ENCODE measurements at regions of chr1 and their contacts with region 1.

Region 1: GRCh38 chr1:28736450-28737306 is at the start of gene YTHDF2:
- DNase-seq: peak; percentile 96 to 99 (median 97)
- ATAC-seq: peak; percentile 94 to 95 (median 95)
- H3K4me3 ChIP-seq: peak within 1 kb of the TSS; percentile 69 to 92
- H3K4me3 Mint-ChIP-seq: peak within 1 kb of the TSS; percentile 93 to 98 (median 96)
- H3K27ac ChIP-seq: peak within 1 kb of the TSS; percentile 88
- H3K27ac Mint-ChIP-seq: peak within 1 kb of the TSS; percentile 92 to 94
- H3K4me1 ChIP-seq: peaks cover 19 to 32% of the 10 kb centered on the region in 2 experiments
- H3K4me1 Mint-ChIP-seq: peaks cover 32 to 39% (median 38%) of the 10 kb centered on the region in 3 donors
- H3K27me3 ChIP-seq: no peaks in the 10 kb centered on the region
- H3K27me3 Mint-ChIP-seq: no peaks in the 10 kb centered on the region
- total RNA-seq, gene YTHDF2: 61.3 to 77.3 (median 67.0) TPM

Region 2: GRCh38 chr1:28642847-28643635 is 93.6 kb before region 1 on chr1 and contains the start of gene TAF12:
- CTCF ChIA-PET with region 1: interaction called in 1 of 2 experiments, 92 read pairs
- POLR2A ChIA-PET with region 1: interaction called, 6 to 32 read pairs
- DNase-seq: peak; percentile 83 to 98 (median 91)
- ATAC-seq: peak; percentile 85 to 87 (median 86)
- H3K4me3 ChIP-seq: peak within 1 kb of the TSS; percentile 88 to 92
- H3K4me3 Mint-ChIP-seq: peak within 1 kb of the TSS; percentile 94 to 100 (median 95)
- H3K27ac ChIP-seq: peak within 1 kb of the TSS; percentile 95
- H3K27ac Mint-ChIP-seq: peak within 1 kb of the TSS; percentile 96 to 99
- H3K4me1 ChIP-seq: peaks cover 28 to 34% of the 10 kb centered on the region in 2 experiments
- H3K4me1 Mint-ChIP-seq: peaks cover 58% of the 10 kb centered on the region in 3 donors
- H3K27me3 ChIP-seq: no peaks in the 10 kb centered on the region
- H3K27me3 Mint-ChIP-seq: no peaks in the 10 kb centered on the region
- total RNA-seq, gene TAF12: 17.3 to 22.7 (median 20.6) TPM

Region 3: GRCh38 chr1:28668191-28668955 is 68.3 kb before region 1 on chr1 and contains the start of gene GMEB1:
- CTCF ChIA-PET with region 1: interaction called, 6 to 21 read pairs
- POLR2A ChIA-PET with region 1: interaction called, 4 to 7 read pairs
- DNase-seq: peak; percentile 55 to 91 (median 76)
- ATAC-seq: peak; percentile 74 to 80 (median 78)
- H3K4me3 ChIP-seq: peak within 1 kb of the TSS; percentile 89 to 100
- H3K4me3 Mint-ChIP-seq: peak within 1 kb of the TSS; percentile 85 to 94 (median 92)
- H3K27ac ChIP-seq: peak within 1 kb of the TSS; percentile 97
- H3K27ac Mint-ChIP-seq: peak within 1 kb of the TSS; percentile 99
- H3K4me1 ChIP-seq: peaks cover 8 to 37% of the 10 kb centered on the region in 2 experiments
- H3K4me1 Mint-ChIP-seq: peaks cover 20 to 25% (median 22%) of the 10 kb centered on the region in 3 donors
- H3K27me3 ChIP-seq: no peaks in the 10 kb centered on the region
- H3K27me3 Mint-ChIP-seq: no peaks in the 10 kb centered on the region
- total RNA-seq, gene GMEB1: 15.2 to 19.0 (median 18.4) TPM

Region 4: DNA sequence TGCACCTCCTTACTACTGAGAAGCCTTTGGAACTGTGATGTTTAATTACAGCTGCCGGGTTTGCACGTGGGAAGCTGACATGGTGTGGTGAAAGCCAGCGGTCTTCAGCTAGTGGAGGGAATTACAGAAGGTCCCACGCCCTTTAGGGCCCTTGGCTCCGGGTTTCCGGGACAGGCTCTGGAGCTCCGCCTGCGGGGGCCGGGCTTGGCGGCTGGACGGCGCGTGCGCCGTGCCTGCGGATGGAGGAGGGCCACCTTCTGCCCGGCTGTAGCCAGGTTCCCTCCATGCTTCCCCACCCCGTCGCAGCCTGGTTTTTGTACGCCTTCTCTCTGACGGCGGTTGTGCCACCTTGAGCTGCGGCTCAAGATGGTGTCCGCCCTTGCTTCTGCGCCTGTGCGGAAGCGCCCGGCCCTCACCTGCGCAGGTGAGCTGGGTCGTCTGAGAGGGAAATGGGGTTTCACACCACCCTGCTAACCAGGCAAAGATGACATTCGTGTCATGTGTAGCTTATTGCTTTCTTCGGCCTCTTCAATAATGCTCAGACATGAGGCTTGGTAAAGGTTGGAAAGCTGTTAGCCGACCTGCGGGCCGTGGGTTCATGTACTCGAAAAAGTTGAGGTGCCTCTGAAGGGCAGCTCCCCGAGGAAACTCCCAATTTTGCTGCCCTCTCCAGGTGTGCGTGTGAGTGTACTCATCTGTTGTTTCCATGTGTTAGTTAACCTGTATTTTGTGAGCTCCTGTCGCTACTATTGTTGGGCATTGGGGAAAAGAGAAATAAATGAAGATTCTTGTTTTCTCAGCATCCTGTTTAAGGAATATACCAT is 38.7 kb after region 1 on chr1:
- CTCF ChIA-PET with region 1: interaction called, 3 to 32 read pairs
- POLR2A ChIA-PET with region 1: interaction called in 1 of 2 experiments, 5 read pairs
- DNase-seq: peak; percentile 47 to 80 (median 67)
- ATAC-seq: peak; percentile 91 to 95 (median 94)
- H3K4me3 ChIP-seq: peak overlapping the region; percentile 64 to 76
- H3K4me3 Mint-ChIP-seq: peak overlapping the region; percentile 75 to 85 (median 78)
- H3K27ac ChIP-seq: peak overlapping the region; percentile 64
- H3K27ac Mint-ChIP-seq: peak overlapping the region; percentile 76 to 81
- H3K4me1 ChIP-seq: peaks cover 2 to 16% of the 10 kb centered on the region in 2 experiments
- H3K4me1 Mint-ChIP-seq: peaks cover 5 to 10% (median 9%) of the 10 kb centered on the region in 3 donors
- H3K27me3 ChIP-seq: no peaks in the 10 kb centered on the region
- H3K27me3 Mint-ChIP-seq: no peaks in the 10 kb centered on the region

Region 5: GRCh38 chr1:28792644-28793121 is 56.0 kb after region 1 on chr1:
- CTCF ChIA-PET with region 1: no interaction called
- POLR2A ChIA-PET with region 1: no interaction called
- DNase-seq: no peak
- ATAC-seq: no peak
- H3K4me3 ChIP-seq: no peak overlapping the region
- H3K4me3 Mint-ChIP-seq: no peak overlapping the region
- H3K27ac ChIP-seq: no peak overlapping the region
- H3K27ac Mint-ChIP-seq: no peak overlapping the region
- H3K4me1 ChIP-seq: no peaks in the 10 kb centered on the region
- H3K4me1 Mint-ChIP-seq: peaks cover 0 to 7% (median 0%) of the 10 kb centered on the region in 3 donors
- H3K27me3 ChIP-seq: peaks cover 0 to 21% of the 10 kb centered on the region in 2 experiments
- H3K27me3 Mint-ChIP-seq: peaks cover 13 to 17% of the 10 kb centered on the region in 2 donors

Region 6: GRCh38 chr1:29181413-29182225 is 444.9 kb after region 1 on chr1 and contains the start of gene SRSF4:
- CTCF ChIA-PET with region 1: interaction called in 1 of 2 experiments, 14 read pairs
- POLR2A ChIA-PET with region 1: interaction called in 1 of 2 experiments, 8 read pairs
- DNase-seq: peak; percentile 96 to 99 (median 98)
- ATAC-seq: peak; percentile 89 to 97 (median 92)
- H3K4me3 ChIP-seq: peak within 1 kb of the TSS; percentile 89 to 98
- H3K4me3 Mint-ChIP-seq: peak within 1 kb of the TSS; percentile 89 to 95 (median 92)
- H3K27ac ChIP-seq: peak within 1 kb of the TSS; percentile 99
- H3K27ac Mint-ChIP-seq: peak within 1 kb of the TSS; percentile 92 to 96
- H3K4me1 ChIP-seq: peaks cover 30 to 33% of the 10 kb centered on the region in 2 experiments
- H3K4me1 Mint-ChIP-seq: peaks cover 51 to 57% (median 51%) of the 10 kb centered on the region in 3 donors
- H3K27me3 ChIP-seq: no peaks in the 10 kb centered on the region
- H3K27me3 Mint-ChIP-seq: no peaks in the 10 kb centered on the region
- total RNA-seq, gene SRSF4: 76.0 to 90.4 (median 78.9) TPM

Measured in T-cell (primary cell).